Posterior vena cava (tissue), 2 donors: ENCODE measurements at regions of chr17 and their contacts with region 1.

Region 1: DNA sequence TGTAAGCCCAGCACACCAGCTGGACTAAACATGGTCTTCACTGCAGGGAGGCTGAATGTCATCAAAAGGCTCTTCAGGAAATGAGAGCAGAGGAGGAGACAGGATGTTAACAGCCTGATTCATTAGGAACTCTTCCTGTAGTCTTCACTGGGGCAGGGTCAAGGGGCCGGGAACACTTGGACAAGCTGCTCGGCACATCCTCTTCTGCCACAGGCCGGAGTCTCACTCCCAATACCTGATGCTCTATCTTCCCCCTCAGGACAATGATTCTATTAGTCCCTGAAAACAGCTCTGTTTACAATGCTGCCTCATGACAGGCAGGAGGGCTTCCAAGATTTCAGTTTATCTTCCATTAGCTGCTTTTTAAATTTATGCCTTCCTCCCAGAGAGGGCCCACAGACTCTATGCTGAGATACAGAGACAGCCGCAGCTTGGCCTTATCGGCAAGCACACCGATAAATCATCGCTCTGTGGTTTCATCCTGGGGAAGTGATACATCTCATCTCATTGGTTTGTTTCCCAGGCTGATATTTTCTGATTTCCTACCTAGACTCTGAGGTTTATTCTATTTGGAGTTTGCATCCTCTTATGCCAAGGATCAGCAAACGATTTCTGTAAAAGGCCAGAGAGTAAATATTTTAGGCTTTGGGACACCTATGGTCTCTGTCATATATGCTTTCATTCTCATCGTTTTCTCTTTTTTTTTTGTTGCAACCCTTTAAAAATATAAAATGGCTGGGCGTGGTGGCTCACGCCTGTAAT is 214.0 kb upstream of the ASIC2 start:
- DNase-seq: no peak

Region 2: GRCh38 chr17:33079201-33079600 is 427.9 kb before region 1 on chr17:
- intact Hi-C with region 1: no loop called
- DNase-seq: no peak

Region 3: GRCh38 chr17:33444731-33445130 is 62.3 kb before region 1 on chr17:
- intact Hi-C with region 1: loop called in 1 of 2 experiments (anchors 2 kb)
- DNase-seq: no peak